ENCODE measurements at regions of chr22 and their contacts with region 1.

Region 1: DNA sequence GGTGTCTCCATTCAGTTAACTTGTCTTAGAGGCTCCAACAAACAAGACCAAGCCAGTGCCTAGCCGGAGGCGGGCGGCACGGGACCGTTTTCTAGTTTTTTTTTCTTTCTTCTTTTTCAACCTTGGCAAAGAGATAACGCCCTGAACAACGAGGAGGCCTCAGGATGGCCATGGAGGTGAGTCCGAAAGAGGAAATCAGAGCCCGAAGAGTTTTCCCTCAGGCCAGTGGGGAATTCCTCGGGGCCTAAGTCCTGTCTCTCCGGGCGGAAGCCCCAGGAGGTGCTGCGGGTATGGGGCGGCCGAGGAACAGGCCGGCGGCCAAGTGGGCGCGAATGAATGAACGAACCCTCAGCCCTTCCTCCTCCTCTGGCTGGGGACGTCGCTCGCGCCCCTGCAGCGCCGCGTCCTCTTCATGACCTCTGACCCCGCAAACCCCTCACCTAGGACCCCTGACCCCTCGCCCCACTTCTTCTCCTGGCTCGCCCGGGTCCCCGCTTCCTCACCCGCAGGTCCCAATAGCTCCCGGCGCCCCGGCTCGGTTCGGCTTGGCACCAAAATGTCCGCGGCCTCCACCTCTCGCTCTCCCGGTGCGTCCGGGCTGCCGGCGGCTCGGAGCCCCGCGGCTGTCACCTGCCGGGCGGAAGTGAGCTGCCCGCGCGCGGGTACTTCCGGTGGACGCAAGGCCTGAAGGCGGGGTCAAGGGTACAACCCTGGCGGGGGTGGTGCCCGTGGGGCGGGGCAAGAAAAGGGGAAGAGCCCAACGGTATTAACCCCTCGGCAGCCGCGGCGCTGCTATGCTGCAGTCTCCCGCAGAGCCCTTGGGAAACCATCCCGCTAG is at the start of gene AP1B1:
- DNase-seq: peak; percentile 92
- ATAC-seq: peak; percentile 80
- H3K4me3 Mint-ChIP-seq: peak within 1 kb of the TSS; percentile 93
- H3K27ac Mint-ChIP-seq: peak within 1 kb of the TSS; percentile 93
- H3K4me1 Mint-ChIP-seq: peaks cover 61% of the 10 kb centered on the region
- H3K27me3 Mint-ChIP-seq: no peaks in the 10 kb centered on the region
- CTCF ChIP-seq: no peak
- total RNA-seq, gene AP1B1: 120 and 132 TPM in 2 replicates

Region 2: DNA sequence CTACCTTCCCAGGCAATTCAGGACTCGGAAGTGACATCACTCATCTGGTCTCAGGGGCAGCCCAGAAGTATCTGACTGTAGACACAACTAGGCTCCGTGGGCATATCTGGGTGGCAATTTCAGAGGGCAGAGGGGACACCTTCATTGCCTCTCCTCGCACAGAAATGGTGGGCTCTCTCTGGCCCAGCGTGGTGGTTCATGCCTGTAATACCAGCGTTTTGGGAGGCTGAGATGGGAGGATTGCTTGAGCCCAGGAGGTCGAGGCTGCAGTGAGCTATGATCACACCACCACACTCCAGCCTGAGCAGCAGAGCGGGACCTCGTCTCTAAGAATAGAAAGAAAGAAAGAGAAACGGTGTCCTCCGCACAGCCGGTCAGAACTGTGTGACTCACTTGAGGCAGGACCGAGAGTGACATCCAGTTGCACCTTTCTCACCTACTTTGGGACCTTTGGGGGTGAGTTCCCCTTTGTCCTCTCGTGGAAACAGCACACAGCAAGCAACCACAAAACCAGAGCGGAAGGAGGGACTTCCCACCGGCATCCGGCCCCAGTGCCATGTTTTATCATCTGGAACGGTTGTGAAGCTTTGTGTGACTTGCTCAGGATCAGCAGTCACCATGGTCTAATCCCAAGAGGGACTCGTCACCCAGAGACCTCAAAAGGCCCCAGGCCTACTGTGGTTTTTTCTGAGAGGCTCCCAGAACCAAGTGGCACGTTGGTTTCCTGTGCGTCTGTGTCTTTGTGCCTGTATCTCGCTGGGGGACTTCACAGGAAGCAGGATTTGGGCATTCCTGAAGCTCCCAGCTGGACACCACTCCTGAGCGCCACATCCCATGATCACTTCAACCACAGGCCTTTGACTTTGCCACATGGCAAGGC is 220.9 kb before region 1 on chr22:
- CTCF ChIA-PET with region 1: no interaction called
- POLR2A ChIA-PET with region 1: no interaction called
- intact Hi-C with region 1: loop called (anchors 1 kb)
- DNase-seq: peak; percentile 69
- ATAC-seq: peak; percentile 94
- H3K4me3 Mint-ChIP-seq: peak overlapping the region; percentile 73
- H3K27ac Mint-ChIP-seq: peak overlapping the region; percentile 87
- H3K4me1 Mint-ChIP-seq: peaks cover 35% of the 10 kb centered on the region
- H3K27me3 Mint-ChIP-seq: peaks cover 41% of the 10 kb centered on the region
- CTCF ChIP-seq: no peak

Region 3: GRCh38 chr22:29344137-29344536 is 44.0 kb before region 1 on chr22:
- CTCF ChIA-PET with region 1: no interaction called
- POLR2A ChIA-PET with region 1: no interaction called
- intact Hi-C with region 1: no loop called
- DNase-seq: no peak
- ATAC-seq: no peak
- H3K4me3 Mint-ChIP-seq: no peak overlapping the region
- H3K27ac Mint-ChIP-seq: no peak overlapping the region
- H3K4me1 Mint-ChIP-seq: no peaks in the 10 kb centered on the region
- H3K27me3 Mint-ChIP-seq: no peaks in the 10 kb centered on the region
- CTCF ChIP-seq: no peak

Region 4: DNA sequence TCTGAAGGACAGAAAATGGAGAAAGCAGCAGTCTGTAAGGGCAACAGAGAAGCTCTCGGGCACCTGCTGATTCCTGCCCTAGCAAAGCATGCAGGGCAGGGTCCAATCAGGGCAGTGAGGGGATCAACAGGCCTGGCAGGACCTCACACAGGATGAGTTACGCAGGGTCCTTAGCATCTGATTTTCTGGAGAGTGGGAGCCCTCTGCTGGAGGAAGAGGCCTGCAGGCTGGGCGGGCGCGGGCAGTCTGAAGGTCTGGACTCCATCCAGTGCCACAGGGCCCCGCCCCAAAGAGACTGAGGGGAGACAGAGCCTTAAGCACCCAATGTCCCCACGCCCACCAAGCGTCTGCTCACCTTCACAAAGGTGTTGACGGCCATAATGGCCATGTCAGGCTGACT is 28.7 kb before region 1 on chr22:
- CTCF ChIA-PET with region 1: interaction called, 5 read pairs
- POLR2A ChIA-PET with region 1: interaction called, 32 read pairs
- intact Hi-C with region 1: loop called (anchors 1 kb)
- DNase-seq: no peak
- ATAC-seq: no peak
- H3K4me3 Mint-ChIP-seq: no peak overlapping the region
- H3K27ac Mint-ChIP-seq: peak overlapping the region; percentile 24
- H3K4me1 Mint-ChIP-seq: peaks cover 19% of the 10 kb centered on the region
- H3K27me3 Mint-ChIP-seq: no peaks in the 10 kb centered on the region
- CTCF ChIP-seq: no peak

Region 5: GRCh38 chr22:29375398-29376076 is 12.6 kb before region 1 on chr22:
- CTCF ChIA-PET with region 1: interaction called, 4 read pairs
- POLR2A ChIA-PET with region 1: interaction called, 15 read pairs
- intact Hi-C with region 1: loop called (anchors 1 kb)
- DNase-seq: no peak
- ATAC-seq: no peak
- H3K4me3 Mint-ChIP-seq: no peak overlapping the region
- H3K27ac Mint-ChIP-seq: peak overlapping the region; percentile 50
- H3K4me1 Mint-ChIP-seq: peaks cover 67% of the 10 kb centered on the region
- H3K27me3 Mint-ChIP-seq: no peaks in the 10 kb centered on the region
- CTCF ChIP-seq: no peak

Region 6: GRCh38 chr22:29531419-29531818 is 143.3 kb after region 1 on chr22:
- CTCF ChIA-PET with region 1: no interaction called
- POLR2A ChIA-PET with region 1: interaction called, 11 read pairs
- intact Hi-C with region 1: no loop called
- DNase-seq: no peak
- ATAC-seq: no peak
- H3K4me3 Mint-ChIP-seq: no peak overlapping the region
- H3K27ac Mint-ChIP-seq: no peak overlapping the region
- H3K4me1 Mint-ChIP-seq: no peaks in the 10 kb centered on the region
- H3K27me3 Mint-ChIP-seq: no peaks in the 10 kb centered on the region
- CTCF ChIP-seq: no peak

Region 7: DNA sequence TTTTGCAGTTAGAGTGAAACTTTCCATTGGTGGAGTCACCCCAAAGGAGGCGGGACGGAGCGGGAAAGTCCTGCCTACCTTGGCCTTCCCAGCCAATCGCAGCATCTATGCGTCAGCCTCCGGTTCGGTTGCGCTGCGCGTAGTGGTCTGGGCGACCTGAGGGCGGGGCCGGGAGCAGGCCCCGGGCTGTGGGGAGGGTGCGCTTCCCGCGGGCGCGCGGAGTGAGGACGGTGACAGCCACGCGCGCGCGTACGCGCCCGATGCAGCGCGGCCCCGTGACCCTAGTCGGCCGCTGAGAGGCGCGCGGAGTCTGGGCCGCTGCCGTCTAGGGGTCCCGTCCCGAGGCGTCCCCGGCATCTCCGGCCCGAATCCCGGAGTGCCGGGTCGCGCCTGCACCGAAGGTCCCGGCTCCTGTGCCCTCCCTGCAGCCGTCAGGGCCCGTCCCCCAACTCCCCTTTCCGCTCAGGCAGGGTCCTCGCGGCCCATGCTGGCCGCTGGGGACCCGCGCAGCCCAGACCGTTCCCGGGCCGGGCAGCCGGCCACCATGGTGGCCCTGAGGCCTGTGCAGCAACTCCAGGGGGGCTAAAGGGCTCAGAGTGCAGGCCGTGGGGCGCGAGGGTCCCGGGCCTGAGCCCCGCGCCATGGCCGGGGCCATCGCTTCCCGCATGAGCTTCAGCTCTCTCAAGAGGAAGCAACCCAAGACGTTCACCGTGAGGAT is 215.4 kb after region 1 on chr22 and contains the start of gene NF2:
- CTCF ChIA-PET with region 1: no interaction called
- POLR2A ChIA-PET with region 1: no interaction called
- intact Hi-C with region 1: loop called (anchors 1 kb)
- DNase-seq: peak; percentile 94
- ATAC-seq: peak; percentile 97
- H3K4me3 Mint-ChIP-seq: peak within 1 kb of the TSS; percentile 93
- H3K27ac Mint-ChIP-seq: peak within 1 kb of the TSS; percentile 95
- H3K4me1 Mint-ChIP-seq: peaks cover 24% of the 10 kb centered on the region
- H3K27me3 Mint-ChIP-seq: no peaks in the 10 kb centered on the region
- CTCF ChIP-seq: no peak
- total RNA-seq, gene NF2: 30.3 and 32.3 TPM in 2 replicates

Region 8: DNA sequence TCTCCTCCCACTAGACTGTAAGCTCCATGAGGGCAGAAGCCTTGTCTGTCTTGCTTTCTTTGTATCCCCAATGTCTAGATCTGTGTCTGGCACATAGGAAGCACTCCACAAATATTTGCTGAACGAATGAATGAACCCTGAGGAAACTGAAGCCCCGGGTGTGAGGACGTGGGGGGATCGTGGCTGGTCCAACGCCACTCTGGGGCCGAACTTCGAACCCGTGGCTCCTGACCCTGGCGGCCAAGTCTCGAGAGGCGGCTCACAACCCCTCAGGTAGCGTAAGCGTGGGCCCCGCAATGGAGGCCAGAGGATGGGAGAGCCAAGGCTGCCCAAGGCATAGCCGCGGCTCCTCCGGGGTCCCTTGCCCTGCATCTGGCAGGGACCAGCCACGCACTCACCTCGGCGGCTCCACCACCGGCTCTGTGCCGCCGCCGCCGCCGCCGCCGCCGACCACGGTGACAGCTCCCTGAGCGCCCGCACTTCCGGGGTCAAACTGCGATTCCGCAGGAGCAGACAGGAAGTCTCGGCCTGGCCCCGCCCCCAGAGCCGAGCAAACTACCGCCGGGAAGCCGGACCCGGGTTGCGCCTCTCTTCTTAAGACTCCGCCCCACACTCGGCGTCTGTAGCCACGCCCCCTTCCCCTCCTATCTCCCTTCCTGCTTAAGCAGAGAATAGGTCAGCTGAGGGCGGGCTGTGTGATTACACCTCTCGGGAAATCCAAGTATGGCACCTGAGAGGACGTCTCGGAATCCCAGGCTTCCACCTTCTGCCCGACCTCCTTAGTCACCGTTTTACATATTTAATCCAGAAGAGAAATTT is 449.8 kb after region 1 on chr22 and contains the start of gene ASCC2:
- CTCF ChIA-PET with region 1: no interaction called
- POLR2A ChIA-PET with region 1: no interaction called
- intact Hi-C with region 1: loop called (anchors 5 kb)
- DNase-seq: peak; percentile 97
- ATAC-seq: peak; percentile 99
- H3K4me3 Mint-ChIP-seq: peak within 1 kb of the TSS; percentile 97
- H3K27ac Mint-ChIP-seq: peak within 1 kb of the TSS; percentile 96
- H3K4me1 Mint-ChIP-seq: peaks cover 37% of the 10 kb centered on the region
- H3K27me3 Mint-ChIP-seq: no peaks in the 10 kb centered on the region
- CTCF ChIP-seq: no peak
- total RNA-seq, gene ASCC2: 88.1 and 89.7 TPM in 2 replicates

Measured in activated B cell treated with CpG ODN at 0.5 μM for 24 hours (primary cell).